GM10248 (cell line): ENCODE measurements at regions of chr5 and their contacts with region 1.

Region 1: DNA sequence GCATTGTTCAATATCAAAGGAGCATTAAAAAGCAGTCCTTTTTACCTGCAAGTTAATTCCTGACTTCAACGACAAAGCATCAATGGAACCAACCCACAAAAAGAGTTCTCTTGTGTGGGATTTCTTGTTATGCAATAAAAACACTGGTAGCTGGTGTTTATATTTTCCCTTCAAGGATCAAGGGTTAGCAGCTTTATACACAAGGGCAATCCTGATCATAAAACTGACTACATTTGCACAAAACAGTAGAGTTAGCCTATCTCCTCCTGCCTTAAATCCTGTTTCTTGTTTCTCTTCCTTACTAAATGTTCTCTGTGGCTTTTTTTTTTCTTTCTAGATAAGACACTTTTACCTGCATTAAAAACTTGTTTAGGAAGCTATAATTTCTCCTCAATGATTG is 306.4 kb downstream of the SLCO4C1 start:
- DNase-seq: no peak
- CTCF ChIP-seq: no peak

Region 2: DNA sequence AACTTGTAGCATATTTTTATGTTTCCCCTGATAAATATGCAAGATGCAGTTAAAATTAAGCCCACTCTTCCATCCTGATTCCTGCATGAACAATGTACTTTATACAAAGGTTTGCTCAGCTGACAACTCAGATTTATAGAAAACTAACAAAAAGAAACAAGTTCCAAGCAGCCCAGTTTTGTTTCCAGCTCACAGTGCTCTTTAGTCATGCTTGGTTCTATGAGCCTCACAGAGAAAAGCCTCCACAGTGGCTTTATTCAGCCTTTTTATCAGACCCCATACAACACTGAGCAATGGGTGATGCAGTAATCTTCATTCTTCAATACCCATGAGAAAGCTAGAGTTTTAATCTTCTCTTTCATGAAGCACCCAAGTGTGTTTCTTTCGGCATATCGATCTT is 23.2 kb before region 1 on chr5:
- CTCF ChIA-PET with region 1: no interaction called
- POLR2A ChIA-PET with region 1: no interaction called
- DNase-seq: no peak
- CTCF ChIP-seq: no peak

Region 3: GRCh38 chr5:101977729-101978345 is 11.8 kb before region 1 on chr5:
- CTCF ChIA-PET with region 1: interaction called, 14 read pairs
- POLR2A ChIA-PET with region 1: no interaction called
- DNase-seq: peak; percentile 48
- CTCF ChIP-seq: peak; percentile 60